Activated T-helper 1 cell treated with anti-CD3 and anti-CD28 coated beads, Interleukin-12 subunit alpha, Interleukin-12 subunit beta, Interleukin-2, Interleukin-4 antibody, amounts not matched to agents 30 ng/mL and 10 ng/mL and 1 ng/mL, durations not matched to agents 14 hours and 24 hours and 36 hours (primary cell): ENCODE measurements at regions of chr7 and their contacts with region 1.

Region 1: DNA sequence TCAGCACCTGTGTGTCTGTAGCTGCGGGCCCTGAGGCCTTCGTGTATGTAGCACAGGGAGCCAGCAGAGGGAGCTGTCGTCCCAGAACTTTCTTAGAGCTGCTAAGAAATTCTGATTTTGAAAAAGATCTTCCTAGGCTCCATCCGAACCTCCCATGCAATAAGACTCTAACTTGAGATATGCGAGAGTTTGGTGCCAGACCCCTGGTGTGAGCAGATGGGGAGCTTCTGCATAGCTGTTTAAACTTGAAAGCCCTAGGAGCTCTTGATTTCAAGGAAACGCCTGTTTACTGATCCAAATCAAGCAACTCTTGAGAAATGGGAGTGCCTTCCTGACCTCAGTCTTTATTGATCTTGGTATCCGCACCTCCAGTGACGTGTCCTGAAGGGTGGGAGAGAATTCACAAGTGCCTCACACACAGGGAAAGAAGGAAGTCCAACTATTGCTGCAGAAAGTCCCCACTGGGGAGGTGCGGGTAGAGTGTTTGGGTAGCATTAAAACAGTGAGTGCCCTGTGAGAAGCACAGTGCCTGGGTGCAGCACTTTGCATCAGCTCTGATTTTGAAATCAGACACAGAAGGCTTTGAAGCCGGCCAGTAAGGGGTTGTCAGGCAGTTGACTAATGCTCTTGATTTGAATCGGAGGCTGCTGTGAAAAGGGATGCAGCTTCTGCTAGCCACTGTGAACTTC is 66.4 kb upstream of the STRIP2 start:
- DNase-seq: peak; percentile 68
- H3K4me3 Mint-ChIP-seq: peak overlapping the region; percentile 73
- H3K27ac Mint-ChIP-seq: peak overlapping the region; percentile 88
- H3K4me1 Mint-ChIP-seq: peaks cover 58% of the 10 kb centered on the region
- H3K27me3 Mint-ChIP-seq: no peaks in the 10 kb centered on the region

Region 2: GRCh38 chr7:128247676-128248194 is 1120.1 kb before region 1 on chr7:
- intact Hi-C with region 1: no loop called
- DNase-seq: no peak
- H3K4me3 Mint-ChIP-seq: no peak overlapping the region
- H3K27ac Mint-ChIP-seq: no peak overlapping the region
- H3K4me1 Mint-ChIP-seq: no peaks in the 10 kb centered on the region
- H3K27me3 Mint-ChIP-seq: peaks cover 7% of the 10 kb centered on the region

Region 3: GRCh38 chr7:129231666-129232065 is 136.2 kb before region 1 on chr7:
- intact Hi-C with region 1: no loop called
- DNase-seq: no peak
- H3K4me3 Mint-ChIP-seq: no peak overlapping the region
- H3K27ac Mint-ChIP-seq: no peak overlapping the region
- H3K4me1 Mint-ChIP-seq: peaks cover 11% of the 10 kb centered on the region
- H3K27me3 Mint-ChIP-seq: no peaks in the 10 kb centered on the region

Region 4: DNA sequence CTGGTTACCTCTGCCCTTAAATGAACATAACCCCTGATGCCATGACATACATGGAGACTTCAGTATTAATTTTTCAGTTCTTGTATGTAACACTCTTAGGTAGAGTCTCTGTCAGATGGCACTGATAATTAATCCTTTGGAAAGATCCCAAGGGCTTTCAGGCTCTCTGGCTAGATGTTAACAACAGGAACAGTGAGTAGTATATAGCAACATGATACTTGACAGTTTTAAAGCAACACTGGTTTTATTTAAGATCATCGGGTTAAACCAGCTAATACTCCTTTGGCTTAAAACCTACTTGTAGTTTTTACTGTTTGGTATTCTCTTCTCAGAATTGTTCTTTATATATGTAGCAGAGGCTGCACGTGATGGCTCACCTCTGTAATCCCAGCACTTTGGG is 115.7 kb before region 1 on chr7:
- intact Hi-C with region 1: no loop called
- DNase-seq: no peak
- H3K4me3 Mint-ChIP-seq: no peak overlapping the region
- H3K27ac Mint-ChIP-seq: no peak overlapping the region
- H3K4me1 Mint-ChIP-seq: no peaks in the 10 kb centered on the region
- H3K27me3 Mint-ChIP-seq: no peaks in the 10 kb centered on the region

Region 5: GRCh38 chr7:129386506-129386905 is 18.7 kb after region 1 on chr7:
- intact Hi-C with region 1: loop called (anchors 2 kb)
- DNase-seq: no peak
- H3K4me3 Mint-ChIP-seq: no peak overlapping the region
- H3K27ac Mint-ChIP-seq: no peak overlapping the region
- H3K4me1 Mint-ChIP-seq: peaks cover 43% of the 10 kb centered on the region
- H3K27me3 Mint-ChIP-seq: no peaks in the 10 kb centered on the region

Region 6: GRCh38 chr7:129468087-129468486 is 100.2 kb after region 1 on chr7:
- intact Hi-C with region 1: loop called (anchors 1 kb)
- DNase-seq: no peak
- H3K4me3 Mint-ChIP-seq: no peak overlapping the region
- H3K27ac Mint-ChIP-seq: no peak overlapping the region
- H3K4me1 Mint-ChIP-seq: peaks cover 31% of the 10 kb centered on the region
- H3K27me3 Mint-ChIP-seq: no peaks in the 10 kb centered on the region

Region 7: DNA sequence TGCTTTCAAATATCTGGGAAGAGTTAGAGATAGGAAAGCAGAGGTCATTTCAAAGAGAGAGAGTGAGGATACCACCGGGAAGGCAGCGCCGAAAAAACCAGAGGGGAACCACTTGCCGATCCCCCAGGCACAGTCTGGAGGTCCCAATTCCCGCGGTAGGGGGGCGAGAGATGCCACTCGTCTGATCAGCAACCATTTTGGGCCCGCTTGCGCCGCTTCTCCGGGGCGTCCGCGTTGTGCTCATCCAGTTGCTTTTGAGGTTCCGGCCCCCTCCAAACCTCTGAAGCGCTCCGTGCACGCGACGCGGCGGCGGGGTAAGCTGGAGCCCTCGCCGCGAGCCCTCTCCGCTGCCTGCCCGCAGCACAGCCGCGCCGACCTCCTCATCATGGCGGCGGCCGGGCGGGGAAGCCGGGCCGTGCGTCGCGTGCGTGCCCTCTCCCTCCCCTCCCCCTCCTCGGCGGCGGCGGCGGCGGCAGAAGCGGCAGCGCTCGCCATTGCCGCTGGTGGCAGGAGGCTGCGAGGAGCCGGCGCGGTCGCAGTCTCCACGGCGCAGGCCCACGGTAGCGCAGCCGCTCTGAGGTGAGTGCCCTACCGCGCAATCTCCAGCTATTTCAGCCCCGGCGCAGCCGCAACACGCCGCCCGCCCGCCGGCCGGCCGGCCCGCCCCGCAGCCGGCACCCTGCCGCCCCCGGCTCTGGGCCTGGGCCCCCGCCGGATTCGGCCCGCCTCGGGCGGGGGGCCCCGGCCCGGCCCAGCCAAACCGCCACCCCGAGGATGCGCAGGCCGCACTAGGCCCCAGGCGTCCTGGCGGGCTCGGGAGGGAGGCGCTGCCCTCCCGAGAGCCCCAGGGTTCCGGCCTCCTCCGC is 243.6 kb after region 1 on chr7 and contains the start of gene NRF1:
- intact Hi-C with region 1: loop called (anchors 5 kb)
- DNase-seq: peak; percentile 89
- H3K4me3 Mint-ChIP-seq: peak within 1 kb of the TSS; percentile 98
- H3K27ac Mint-ChIP-seq: peak within 1 kb of the TSS; percentile 99
- H3K4me1 Mint-ChIP-seq: peaks cover 48% of the 10 kb centered on the region
- H3K27me3 Mint-ChIP-seq: no peaks in the 10 kb centered on the region
- total RNA-seq, gene NRF1: 22.8 and 25.9 TPM in 2 replicates

Region 8: GRCh38 chr7:129825496-129826267 is 457.8 kb after region 1 on chr7:
- intact Hi-C with region 1: loop called (anchors 1 kb)
- DNase-seq: peak; percentile 83
- H3K4me3 Mint-ChIP-seq: peak overlapping the region; percentile 89
- H3K27ac Mint-ChIP-seq: peak overlapping the region; percentile 67
- H3K4me1 Mint-ChIP-seq: peaks cover 14% of the 10 kb centered on the region
- H3K27me3 Mint-ChIP-seq: no peaks in the 10 kb centered on the region